A673 (cell line): ENCODE measurements at regions of chr7 and their contacts with region 1.

Region 1: DNA sequence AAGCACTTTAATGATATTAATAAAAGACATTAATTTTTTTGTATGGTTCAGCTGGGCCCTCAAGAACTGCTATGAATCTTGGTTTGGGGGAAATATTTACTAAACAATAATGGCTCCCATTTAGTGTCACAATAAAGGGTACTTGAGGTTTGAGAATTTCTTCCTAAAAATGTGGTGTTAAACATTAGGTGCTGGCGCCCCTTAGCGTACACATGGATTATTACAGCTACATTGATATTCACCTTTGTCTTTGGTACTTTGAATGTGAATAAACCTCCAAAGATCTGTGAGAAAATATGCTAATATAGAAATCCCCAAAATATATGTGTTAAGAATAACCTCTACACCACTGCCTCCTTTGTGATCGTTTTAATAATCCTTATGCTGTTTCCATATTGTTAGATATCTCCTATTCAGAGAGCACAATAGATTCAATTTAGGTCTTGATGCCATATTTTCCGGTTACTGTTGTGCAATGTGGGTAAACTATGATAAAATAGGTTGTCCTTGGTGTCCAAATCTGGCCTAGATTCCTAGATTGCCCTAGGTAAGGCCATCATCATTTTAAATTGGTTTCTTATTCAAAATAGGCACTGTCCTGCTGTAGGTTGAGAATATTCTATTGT is 161.8 kb upstream of the CACNA2D1 start:
- DNase-seq: peak; percentile 74
- H3K4me3 ChIP-seq: no peak overlapping the region
- H3K27ac ChIP-seq: no peak overlapping the region
- H3K4me1 ChIP-seq: peaks cover 4% of the 10 kb centered on the region
- H3K27me3 ChIP-seq: no peaks in the 10 kb centered on the region
- CTCF ChIP-seq: peak; percentile 84

Region 2: GRCh38 chr7:82044497-82045080 is 560.8 kb before region 1 on chr7:
- CTCF ChIA-PET with region 1: no interaction called
- POLR2A ChIA-PET with region 1: no interaction called
- intact Hi-C with region 1: loop called (anchors 1 kb)
- DNase-seq: peak; percentile 70
- H3K4me3 ChIP-seq: no peak overlapping the region
- H3K27ac ChIP-seq: no peak overlapping the region
- H3K4me1 ChIP-seq: peaks cover 17% of the 10 kb centered on the region
- H3K27me3 ChIP-seq: no peaks in the 10 kb centered on the region
- CTCF ChIP-seq: peak; percentile 76

Region 3: GRCh38 chr7:82172017-82172416 is 433.3 kb before region 1 on chr7:
- CTCF ChIA-PET with region 1: no interaction called
- POLR2A ChIA-PET with region 1: no interaction called
- intact Hi-C with region 1: loop called (anchors 5 kb)
- DNase-seq: no peak
- H3K4me3 ChIP-seq: no peak overlapping the region
- H3K27ac ChIP-seq: no peak overlapping the region
- H3K4me1 ChIP-seq: peaks cover 10% of the 10 kb centered on the region
- H3K27me3 ChIP-seq: no peaks in the 10 kb centered on the region
- CTCF ChIP-seq: peak; percentile 35; the same call in 1 of the 2 replicates

Region 4: DNA sequence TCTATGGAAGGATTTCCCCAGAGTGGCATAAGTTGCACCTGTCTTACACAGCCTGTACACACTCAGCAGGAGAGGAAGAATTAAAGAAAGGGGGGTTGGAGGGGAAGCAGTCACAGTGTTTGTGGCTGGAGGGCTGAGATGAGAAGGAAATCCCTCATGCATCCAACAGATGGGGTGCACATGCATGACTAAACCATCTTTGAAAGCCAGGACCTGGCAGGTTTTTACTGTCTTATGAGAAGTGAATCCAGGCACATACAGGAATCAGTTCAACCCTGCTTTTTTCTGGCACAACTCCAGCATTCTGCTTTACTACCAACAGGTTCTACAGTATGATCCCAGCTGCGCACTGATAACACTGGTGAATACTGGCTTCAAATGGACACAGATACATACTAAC is 269.4 kb before region 1 on chr7:
- CTCF ChIA-PET with region 1: no interaction called
- POLR2A ChIA-PET with region 1: no interaction called
- intact Hi-C with region 1: no loop called
- DNase-seq: peak; percentile 76
- H3K4me3 ChIP-seq: no peak overlapping the region
- H3K27ac ChIP-seq: no peak overlapping the region
- H3K4me1 ChIP-seq: peaks cover 28% of the 10 kb centered on the region
- H3K27me3 ChIP-seq: no peaks in the 10 kb centered on the region
- CTCF ChIP-seq: peak; percentile 30; the same call in 1 of the 2 replicates

Region 5: DNA sequence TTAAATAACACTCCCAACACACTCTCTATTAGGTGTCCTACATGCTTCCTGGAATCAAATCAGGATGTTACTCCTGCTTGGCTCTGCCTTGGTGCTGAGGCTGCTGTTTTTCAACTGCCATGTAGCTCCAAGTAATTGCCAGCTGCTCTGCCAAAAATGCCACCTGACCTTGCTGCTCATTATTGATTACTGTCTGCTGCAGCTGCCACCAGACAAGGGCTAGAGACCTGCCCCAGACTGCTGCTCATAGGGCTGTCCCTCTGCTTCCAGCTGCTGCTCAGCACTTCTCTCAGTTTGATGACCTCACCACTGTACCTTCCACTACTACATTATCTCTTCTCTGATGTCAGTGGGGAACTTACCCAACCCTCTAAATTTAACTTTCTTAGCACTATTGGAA is 454.9 kb after region 1 on chr7:
- CTCF ChIA-PET with region 1: no interaction called
- POLR2A ChIA-PET with region 1: no interaction called
- intact Hi-C with region 1: no loop called
- DNase-seq: no peak
- H3K4me3 ChIP-seq: no peak overlapping the region
- H3K27ac ChIP-seq: no peak overlapping the region
- H3K4me1 ChIP-seq: no peaks in the 10 kb centered on the region
- H3K27me3 ChIP-seq: no peaks in the 10 kb centered on the region
- CTCF ChIP-seq: no peak